Dorsolateral prefrontal cortex (tissue), 120 donors: ENCODE measurements at regions of chr10 and their contacts with region 1.

Region 1: DNA sequence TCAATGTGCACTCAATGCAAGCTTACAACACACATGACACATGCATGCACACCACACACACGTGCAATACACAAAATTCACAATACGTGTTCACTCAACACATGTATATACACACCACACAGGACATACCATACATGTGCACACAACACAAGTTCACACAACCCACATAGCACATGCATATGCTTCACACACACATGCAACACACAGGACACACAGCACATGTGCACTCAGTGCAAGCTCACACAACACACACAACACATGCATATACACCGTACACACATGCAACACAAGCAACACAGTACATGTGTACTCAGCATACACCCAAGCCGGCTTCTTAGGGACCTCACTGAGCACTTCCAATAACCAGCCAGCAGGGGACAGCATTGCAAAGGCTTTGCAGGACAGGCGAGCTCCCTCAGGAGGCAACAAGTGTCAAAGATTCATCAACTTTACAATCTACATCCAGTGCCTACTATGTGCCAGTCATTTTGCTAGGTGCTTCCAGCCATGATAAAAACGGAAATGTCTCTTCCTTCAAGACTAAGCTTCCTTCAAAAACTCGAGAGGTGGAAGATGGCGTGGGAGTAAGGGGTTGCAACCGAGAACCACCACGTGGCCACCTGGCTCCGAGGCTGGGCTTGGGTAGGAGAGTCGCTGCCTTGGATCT is 61.1 kb downstream of the JCAD start:
- DNase-seq: peak; percentile 41 to 83 (median 74)
- H3K4me3 ChIP-seq: no peak overlapping the region
- H3K27ac ChIP-seq: no peak overlapping the region
- H3K27me3 ChIP-seq: peaks cover 0 to 8% (median 0%) of the 10 kb centered on the region in 45 donors
- CTCF ChIP-seq: peak; percentile 79 to 99 (median 95)

Region 2: GRCh38 chr10:29479081-29479925 is 519.0 kb before region 1 on chr10:
- intact Hi-C with region 1: no loop called
- DNase-seq: no peak
- H3K4me3 ChIP-seq: no peak overlapping the region
- H3K27ac ChIP-seq: peak overlapping the region in 4 of 59 donors; percentile 11 to 33 (median 16)
- H3K27me3 ChIP-seq: no peaks in the 10 kb centered on the region
- CTCF ChIP-seq: no peak

Region 3: DNA sequence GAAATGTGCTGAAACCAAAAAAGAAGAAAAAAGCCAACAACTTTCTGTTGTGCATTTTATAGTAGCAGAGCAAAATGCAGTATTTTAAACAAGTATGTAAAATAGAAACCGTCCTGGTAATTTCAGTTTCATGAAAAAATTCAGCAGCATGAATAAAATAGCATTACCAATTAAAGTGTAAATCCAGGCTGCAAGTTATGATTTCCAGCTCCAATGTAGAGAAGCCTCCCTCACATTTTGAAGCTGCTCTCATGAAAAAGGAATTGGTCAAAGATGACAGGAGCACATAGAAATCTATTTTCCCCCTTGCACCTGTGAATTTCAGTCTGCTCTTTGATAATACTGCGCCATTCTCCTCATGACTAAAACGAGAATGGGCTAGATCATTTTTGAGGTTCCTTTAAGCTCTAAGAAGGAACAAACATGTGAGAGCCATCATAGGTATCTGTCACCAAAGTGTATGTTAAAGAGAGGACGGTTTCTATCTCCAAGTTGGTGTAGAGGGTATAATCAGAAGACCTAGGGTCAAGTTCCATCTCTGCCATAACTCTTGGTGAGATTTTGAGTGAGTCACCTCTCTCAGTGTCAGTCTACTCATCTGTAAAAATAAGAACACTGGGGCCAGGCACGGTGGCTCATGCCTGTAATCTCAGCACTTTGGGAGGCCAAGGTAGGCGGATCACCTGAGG is 243.3 kb after region 1 on chr10:
- intact Hi-C with region 1: loop called in 1 of 2 experiments (anchors 2 kb)
- DNase-seq: no peak
- H3K4me3 ChIP-seq: no peak overlapping the region
- H3K27ac ChIP-seq: no peak overlapping the region
- H3K27me3 ChIP-seq: no peaks in the 10 kb centered on the region
- CTCF ChIP-seq: peak in 5 of 56 donors; percentile 0 to 5 (median 2)